Activated T-helper 2 cell treated with anti-CD3 and anti-CD28 coated beads, Interferon-gamma antibody, Interleukin-2, Interleukin-4, amounts not matched to agents 10 μg/mL and 5 μg/mL and 100 μg/mL, durations not matched to agents 14 hours and 24 hours and 36 hours (primary cell): ENCODE measurements at regions of chr11 and their contacts with region 1.

Region 1: GRCh38 chr11:47938791-47939560 is 41.4 kb upstream of the PTPRJ start:
- DNase-seq: no peak
- H3K4me3 Mint-ChIP-seq: no peak overlapping the region
- H3K27ac Mint-ChIP-seq: peak overlapping the region; percentile 55
- H3K4me1 Mint-ChIP-seq: peaks cover 32% of the 10 kb centered on the region
- H3K27me3 Mint-ChIP-seq: no peaks in the 10 kb centered on the region

Region 2: GRCh38 chr11:47980245-47981049 is 41.5 kb after region 1 on chr11 and contains the start of gene PTPRJ:
- intact Hi-C with region 1: loop called (anchors 5 kb)
- DNase-seq: peak; percentile 59
- H3K4me3 Mint-ChIP-seq: peak within 1 kb of the TSS; percentile 95
- H3K27ac Mint-ChIP-seq: peak within 1 kb of the TSS; percentile 34
- H3K4me1 Mint-ChIP-seq: peaks cover 24% of the 10 kb centered on the region
- H3K27me3 Mint-ChIP-seq: peaks cover 10% of the 10 kb centered on the region
- total RNA-seq, gene PTPRJ: 50.9 and 53.2 TPM in 2 replicates